Caco-2 (cell line): ENCODE measurements at regions of chr7 and their contacts with region 1.

Region 1: DNA sequence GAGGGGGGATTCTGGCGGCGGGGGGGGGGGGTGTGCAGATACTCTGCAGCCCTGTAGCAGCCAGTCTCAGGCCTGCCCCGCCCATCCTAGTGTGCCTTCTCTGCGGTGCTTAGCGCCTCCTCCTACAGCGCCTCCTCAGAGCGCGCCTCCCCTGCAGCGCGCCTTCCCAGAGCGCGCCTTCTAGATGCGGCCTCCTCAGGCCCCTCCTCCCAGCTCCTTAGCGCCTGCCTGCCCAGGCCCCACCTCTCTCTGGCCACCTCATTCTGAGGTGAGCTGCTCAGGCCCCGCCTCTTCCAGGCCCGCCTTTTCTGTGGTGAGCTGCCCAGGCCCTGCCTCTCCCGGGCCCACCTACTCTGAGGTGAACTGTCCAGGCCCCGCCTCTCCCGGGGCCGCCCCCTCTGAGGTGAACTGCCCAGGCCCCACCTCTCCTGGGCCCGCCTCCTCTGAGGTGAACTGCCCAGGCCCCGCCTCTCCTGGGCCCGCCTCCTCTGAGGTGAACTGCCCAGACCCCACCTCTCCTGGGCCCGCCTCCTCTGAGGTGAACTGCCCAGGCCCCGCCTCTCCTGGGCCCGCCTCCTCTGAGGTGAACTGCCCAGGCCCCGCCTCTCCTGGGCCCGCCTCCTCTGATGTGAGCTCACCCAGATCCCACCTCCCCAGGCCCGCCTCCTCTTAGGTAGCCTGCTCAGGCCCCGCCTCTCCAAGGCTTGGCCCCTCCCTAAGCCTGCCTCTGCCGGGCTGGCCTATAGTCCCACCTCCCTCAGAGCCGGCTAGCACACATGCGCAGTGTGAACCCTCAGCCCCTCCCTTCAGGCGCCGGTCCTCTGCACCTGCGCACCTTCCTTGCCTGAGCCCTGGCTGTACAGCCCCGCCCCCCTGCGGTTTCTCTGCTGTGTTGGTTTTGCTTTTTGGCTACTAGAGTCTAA is 2.1 kb upstream of the SGCE start:
- DNase-seq: peak; percentile 100
- H3K4me3 ChIP-seq: peak overlapping the region; percentile 79
- H3K4me3 Mint-ChIP-seq: peak overlapping the region; percentile 88
- H3K27ac Mint-ChIP-seq: peak overlapping the region; percentile 72
- H3K4me1 ChIP-seq: no peaks in the 10 kb centered on the region
- H3K4me1 Mint-ChIP-seq: peaks cover 6% of the 10 kb centered on the region
- H3K27me3 ChIP-seq: no peaks in the 10 kb centered on the region
- H3K27me3 Mint-ChIP-seq: no peaks in the 10 kb centered on the region
- CTCF ChIP-seq: peak in 1 of 2 experiments; percentile 27

Region 2: DNA sequence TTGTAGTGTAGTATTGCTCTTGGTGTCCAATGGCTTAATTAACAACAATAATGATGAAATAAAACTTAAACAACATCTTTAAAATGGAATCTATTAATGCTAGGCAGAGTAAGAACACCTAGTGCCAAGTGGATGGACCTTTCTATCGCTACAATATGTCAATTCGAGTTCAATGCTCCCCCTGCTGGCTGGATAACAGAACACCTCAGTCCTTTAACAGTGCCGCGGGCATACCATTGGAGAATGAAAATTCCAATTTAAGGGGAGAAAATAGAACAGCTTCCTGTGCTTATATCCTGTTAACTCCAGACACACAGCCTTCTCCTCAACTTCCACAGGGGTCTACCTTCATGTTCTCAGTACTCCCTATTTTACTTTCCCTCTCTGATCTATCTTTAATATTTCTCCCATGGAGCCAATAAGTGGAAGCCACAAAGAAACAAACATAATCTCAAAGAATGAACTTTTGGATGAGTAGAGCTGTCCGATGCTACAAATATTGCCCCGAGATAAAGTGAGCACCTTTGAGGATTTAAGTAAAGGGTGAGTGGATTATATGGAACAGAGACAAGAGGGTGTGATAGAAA is 221.9 kb before region 1 on chr7:
- CTCF ChIA-PET with region 1: no interaction called
- POLR2A ChIA-PET with region 1: no interaction called
- intact Hi-C with region 1: loop called (anchors 2 kb)
- DNase-seq: peak; percentile 58 to 77
- H3K4me3 ChIP-seq: no peak overlapping the region
- H3K4me3 Mint-ChIP-seq: no peak overlapping the region
- H3K27ac Mint-ChIP-seq: no peak overlapping the region
- H3K4me1 ChIP-seq: peaks cover 25% of the 10 kb centered on the region
- H3K4me1 Mint-ChIP-seq: peaks cover 7% of the 10 kb centered on the region
- H3K27me3 ChIP-seq: no peaks in the 10 kb centered on the region; the same call in 1 of the 2 replicates
- H3K27me3 Mint-ChIP-seq: no peaks in the 10 kb centered on the region
- CTCF ChIP-seq: peak; percentile 72 to 82

Region 3: GRCh38 chr7:94509879-94510581 is 148.0 kb before region 1 on chr7:
- CTCF ChIA-PET with region 1: interaction called, 5 read pairs
- POLR2A ChIA-PET with region 1: interaction called, 3 read pairs
- intact Hi-C with region 1: loop called (anchors 1 kb)
- DNase-seq: peak; percentile 74 to 84
- H3K4me3 ChIP-seq: peak overlapping the region; percentile 72
- H3K4me3 Mint-ChIP-seq: peak overlapping the region; percentile 79
- H3K27ac Mint-ChIP-seq: peak overlapping the region; percentile 65
- H3K4me1 ChIP-seq: peaks cover 23% of the 10 kb centered on the region
- H3K4me1 Mint-ChIP-seq: peaks cover 7% of the 10 kb centered on the region
- H3K27me3 ChIP-seq: no peaks in the 10 kb centered on the region
- H3K27me3 Mint-ChIP-seq: no peaks in the 10 kb centered on the region
- CTCF ChIP-seq: peak in 1 of 2 experiments; percentile 30

Region 4: DNA sequence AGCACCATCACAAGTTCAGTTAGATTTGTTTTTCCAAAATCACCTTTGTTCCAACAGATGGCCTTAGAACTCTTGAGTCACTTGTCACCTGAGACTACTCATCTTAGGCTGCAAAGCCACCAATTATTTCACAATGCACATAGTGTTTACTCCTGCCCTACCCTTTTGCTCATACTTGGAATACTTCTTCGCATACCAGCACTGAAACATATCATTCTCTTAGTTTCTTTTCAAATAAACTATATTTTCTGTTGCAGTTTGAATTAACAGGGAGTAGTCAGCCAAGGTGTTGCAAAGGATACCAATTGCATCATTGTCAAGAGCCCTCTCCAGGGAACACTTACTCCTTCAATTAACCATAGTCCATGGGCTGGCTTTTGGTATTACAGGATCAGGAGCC is 77.4 kb before region 1 on chr7:
- CTCF ChIA-PET with region 1: no interaction called
- POLR2A ChIA-PET with region 1: interaction called, 4 read pairs
- intact Hi-C with region 1: loop called (anchors 1 kb)
- DNase-seq: peak; percentile 70 to 79
- H3K4me3 ChIP-seq: no peak overlapping the region
- H3K4me3 Mint-ChIP-seq: peak overlapping the region; percentile 40
- H3K27ac Mint-ChIP-seq: peak overlapping the region; percentile 88
- H3K4me1 ChIP-seq: peaks cover 47% of the 10 kb centered on the region
- H3K4me1 Mint-ChIP-seq: peaks cover 49% of the 10 kb centered on the region
- H3K27me3 ChIP-seq: no peaks in the 10 kb centered on the region
- H3K27me3 Mint-ChIP-seq: no peaks in the 10 kb centered on the region
- CTCF ChIP-seq: no peak

Region 5: DNA sequence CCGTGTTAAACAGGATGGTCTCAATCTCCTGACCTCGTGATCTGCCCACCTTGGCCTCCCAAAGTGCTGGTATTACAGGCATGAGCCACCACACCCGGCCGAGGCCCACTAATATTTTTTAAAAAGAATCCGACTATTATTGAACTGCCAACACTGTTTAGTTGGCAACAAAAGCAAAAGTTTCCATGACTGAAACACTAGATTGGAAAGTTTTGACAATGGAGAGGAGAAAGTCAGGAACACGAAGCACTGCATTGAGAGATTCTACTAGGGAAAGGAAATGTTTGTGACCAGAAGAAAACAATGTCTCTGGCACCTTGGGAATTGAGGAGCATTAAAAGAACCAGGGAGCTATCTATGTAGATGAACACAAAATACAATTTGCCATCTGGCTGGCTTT is 235.6 kb after region 1 on chr7:
- CTCF ChIA-PET with region 1: no interaction called
- POLR2A ChIA-PET with region 1: no interaction called
- intact Hi-C with region 1: no loop called
- DNase-seq: no peak
- H3K4me3 ChIP-seq: no peak overlapping the region
- H3K4me3 Mint-ChIP-seq: no peak overlapping the region
- H3K27ac Mint-ChIP-seq: no peak overlapping the region
- H3K4me1 ChIP-seq: no peaks in the 10 kb centered on the region
- H3K4me1 Mint-ChIP-seq: no peaks in the 10 kb centered on the region
- H3K27me3 ChIP-seq: no peaks in the 10 kb centered on the region
- H3K27me3 Mint-ChIP-seq: no peaks in the 10 kb centered on the region
- CTCF ChIP-seq: no peak

Region 6: DNA sequence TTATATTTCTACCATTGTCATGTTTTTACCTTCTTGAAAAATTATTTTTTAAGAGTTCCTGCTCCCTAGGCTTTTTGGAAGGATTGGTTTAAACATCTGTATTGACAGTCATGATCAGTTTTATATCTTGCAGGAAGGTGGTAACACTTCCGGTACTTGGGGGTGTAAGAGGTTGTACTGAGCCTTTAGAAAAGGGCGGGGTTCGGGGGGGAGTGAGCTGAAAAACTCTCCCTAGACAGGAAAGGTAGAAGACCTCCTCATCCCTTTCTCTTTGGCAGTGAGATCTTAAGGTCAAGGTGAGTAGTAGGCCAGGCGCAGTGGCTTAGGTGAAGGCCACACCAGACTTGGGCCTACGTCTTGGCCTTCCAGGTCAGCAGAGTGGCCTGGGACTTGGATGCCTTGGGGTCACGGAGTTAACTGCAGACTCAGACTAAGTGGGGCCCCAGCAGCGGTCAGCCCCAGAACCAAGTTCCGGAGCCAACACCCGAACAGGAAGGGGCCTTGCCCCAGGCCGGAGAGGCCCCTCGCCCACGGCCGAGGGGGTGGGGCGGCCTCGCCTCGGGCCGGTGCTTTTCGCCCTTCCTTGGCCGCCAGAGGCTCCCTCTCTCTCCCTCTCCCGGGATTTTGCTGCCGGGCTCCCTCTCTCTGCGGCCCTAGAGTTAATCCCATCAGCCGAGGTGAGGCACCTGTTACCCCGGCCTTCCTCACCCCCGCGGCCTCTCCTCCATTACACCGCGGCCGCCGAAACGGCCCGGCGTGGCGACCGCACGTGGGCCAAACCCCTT is 249.2 kb after region 1 on chr7 and contains the start of gene PPP1R9A:
- CTCF ChIA-PET with region 1: interaction called, 3 read pairs
- POLR2A ChIA-PET with region 1: interaction called, 5 read pairs
- intact Hi-C with region 1: loop called (anchors 1 kb)
- DNase-seq: peak; percentile 82
- H3K4me3 ChIP-seq: peak within 1 kb of the TSS; percentile 79
- H3K4me3 Mint-ChIP-seq: peak within 1 kb of the TSS; percentile 79
- H3K27ac Mint-ChIP-seq: peak within 1 kb of the TSS; percentile 89
- H3K4me1 ChIP-seq: peaks cover 10% of the 10 kb centered on the region
- H3K4me1 Mint-ChIP-seq: no peaks in the 10 kb centered on the region
- H3K27me3 ChIP-seq: no peaks in the 10 kb centered on the region
- H3K27me3 Mint-ChIP-seq: no peaks in the 10 kb centered on the region
- CTCF ChIP-seq: peak; percentile 30 to 68
- total RNA-seq, gene PPP1R9A: 37.2 and 37.4 TPM in 2 replicates

Region 7: DNA sequence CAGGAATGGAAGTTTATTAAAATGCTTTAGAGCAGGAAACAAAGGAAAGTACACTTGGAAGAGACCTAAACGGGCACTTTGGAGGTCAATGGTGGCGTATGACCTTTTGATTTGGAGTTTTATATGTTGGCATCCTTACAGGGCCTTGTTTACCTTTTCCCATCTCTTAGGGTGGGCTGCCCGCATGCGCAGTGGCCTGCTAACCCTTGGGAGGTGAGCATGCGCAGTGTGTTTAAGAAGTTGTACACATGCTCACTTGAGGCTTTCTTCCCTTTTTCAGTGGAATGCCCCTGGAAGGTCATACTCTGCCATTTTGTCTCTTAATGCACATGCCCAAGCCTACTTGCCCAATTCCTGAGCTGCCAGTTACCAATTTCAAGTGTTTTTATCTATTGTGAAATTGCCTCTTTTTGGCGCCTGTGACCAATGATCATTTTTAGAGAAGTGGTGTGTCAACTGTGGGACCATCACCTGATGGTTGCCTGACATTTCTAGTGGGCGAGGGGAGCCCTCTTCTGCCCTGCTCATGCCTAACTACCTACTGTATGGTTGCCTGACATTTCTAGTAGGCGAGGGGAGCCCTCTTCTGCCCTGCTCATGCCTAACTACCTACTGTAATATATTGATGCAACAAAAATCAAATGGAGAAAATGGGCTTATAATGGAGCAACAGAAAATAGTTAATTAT is 387.3 kb after region 1 on chr7:
- CTCF ChIA-PET with region 1: no interaction called
- POLR2A ChIA-PET with region 1: no interaction called
- intact Hi-C with region 1: loop called (anchors 1 kb)
- DNase-seq: peak; percentile 63
- H3K4me3 ChIP-seq: no peak overlapping the region
- H3K4me3 Mint-ChIP-seq: no peak overlapping the region
- H3K27ac Mint-ChIP-seq: no peak overlapping the region
- H3K4me1 ChIP-seq: peaks cover 5% of the 10 kb centered on the region; the same call in 1 of the 2 replicates
- H3K4me1 Mint-ChIP-seq: no peaks in the 10 kb centered on the region
- H3K27me3 ChIP-seq: no peaks in the 10 kb centered on the region
- H3K27me3 Mint-ChIP-seq: no peaks in the 10 kb centered on the region
- CTCF ChIP-seq: peak; percentile 17 to 59

Region 8: DNA sequence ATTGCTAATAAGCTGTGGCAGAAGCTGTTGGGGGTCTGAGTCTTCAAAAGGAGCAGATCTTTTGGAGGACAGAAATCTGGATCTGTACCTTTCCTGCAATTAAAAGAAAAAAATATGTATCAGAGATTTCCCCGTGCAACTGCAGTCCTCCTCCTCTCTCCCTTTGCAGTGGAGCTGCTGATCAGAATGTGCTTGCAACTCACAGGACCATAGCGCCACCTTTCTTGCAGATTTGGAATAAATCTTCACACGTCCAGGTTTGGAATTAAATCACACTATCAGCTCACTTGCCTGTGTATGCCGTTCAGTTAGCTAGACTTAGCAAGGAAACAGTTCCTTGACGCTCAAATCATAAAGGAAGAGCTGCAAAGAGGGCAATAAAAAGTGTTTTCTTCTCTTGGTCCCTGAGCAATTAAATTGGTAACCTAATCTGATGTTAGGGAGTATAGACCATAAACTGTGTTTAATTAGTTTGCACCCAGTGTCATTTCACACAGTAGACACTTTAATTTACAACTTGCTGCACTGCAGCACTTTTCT is 588.9 kb after region 1 on chr7:
- CTCF ChIA-PET with region 1: interaction called, 7 read pairs
- POLR2A ChIA-PET with region 1: interaction called, 3 read pairs
- intact Hi-C with region 1: loop called (anchors 2 kb)
- DNase-seq: peak; percentile 62 to 69
- H3K4me3 ChIP-seq: no peak overlapping the region
- H3K4me3 Mint-ChIP-seq: no peak overlapping the region
- H3K27ac Mint-ChIP-seq: no peak overlapping the region
- H3K4me1 ChIP-seq: no peaks in the 10 kb centered on the region
- H3K4me1 Mint-ChIP-seq: no peaks in the 10 kb centered on the region
- H3K27me3 ChIP-seq: no peaks in the 10 kb centered on the region
- H3K27me3 Mint-ChIP-seq: no peaks in the 10 kb centered on the region
- CTCF ChIP-seq: peak; percentile 71 to 77